Breast epithelium (tissue), 4 donors: ENCODE measurements at regions of chr2 and their contacts with region 1.

Region 1: GRCh38 chr2:40507432-40507831 is 55.5 kb upstream of the SLC8A1 start:
- DNase-seq: no peak
- H3K4me3 ChIP-seq: no peak overlapping the region
- H3K27ac ChIP-seq: no peak overlapping the region
- H3K4me1 ChIP-seq: no peaks in the 10 kb centered on the region
- H3K27me3 ChIP-seq: no peaks in the 10 kb centered on the region
- CTCF ChIP-seq: no peak
- POLR2A ChIP-seq: no peak

Region 2: DNA sequence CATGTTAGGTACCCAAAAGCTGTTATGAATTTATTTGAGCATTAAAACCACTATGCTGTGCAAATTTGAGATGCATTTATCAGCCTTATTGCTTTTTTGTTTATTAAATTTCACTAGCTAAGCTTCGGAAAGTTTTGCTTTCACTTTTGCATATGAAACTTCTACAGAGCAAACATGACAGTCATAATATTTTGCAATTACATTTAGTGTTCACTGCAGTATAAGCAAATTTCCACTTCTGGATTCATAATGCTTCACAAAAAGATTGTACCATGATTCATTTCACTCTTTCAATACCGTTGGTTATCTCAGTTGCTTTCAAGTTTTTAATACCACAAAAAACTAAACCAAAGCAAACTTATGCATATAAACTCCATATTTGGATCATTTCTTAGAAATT is 173.1 kb after region 1 on chr2:
- intact Hi-C with region 1: loop called (anchors 5 kb)
- DNase-seq: no peak
- H3K4me3 ChIP-seq: peak overlapping the region in 1 of 3 donors; percentile 25
- H3K27ac ChIP-seq: no peak overlapping the region
- H3K4me1 ChIP-seq: no peaks in the 10 kb centered on the region
- H3K27me3 ChIP-seq: no peaks in the 10 kb centered on the region
- CTCF ChIP-seq: no peak
- POLR2A ChIP-seq: no peak